GM13977 (cell line): ENCODE measurements at regions of chr1 and their contacts with region 1.

Region 1: DNA sequence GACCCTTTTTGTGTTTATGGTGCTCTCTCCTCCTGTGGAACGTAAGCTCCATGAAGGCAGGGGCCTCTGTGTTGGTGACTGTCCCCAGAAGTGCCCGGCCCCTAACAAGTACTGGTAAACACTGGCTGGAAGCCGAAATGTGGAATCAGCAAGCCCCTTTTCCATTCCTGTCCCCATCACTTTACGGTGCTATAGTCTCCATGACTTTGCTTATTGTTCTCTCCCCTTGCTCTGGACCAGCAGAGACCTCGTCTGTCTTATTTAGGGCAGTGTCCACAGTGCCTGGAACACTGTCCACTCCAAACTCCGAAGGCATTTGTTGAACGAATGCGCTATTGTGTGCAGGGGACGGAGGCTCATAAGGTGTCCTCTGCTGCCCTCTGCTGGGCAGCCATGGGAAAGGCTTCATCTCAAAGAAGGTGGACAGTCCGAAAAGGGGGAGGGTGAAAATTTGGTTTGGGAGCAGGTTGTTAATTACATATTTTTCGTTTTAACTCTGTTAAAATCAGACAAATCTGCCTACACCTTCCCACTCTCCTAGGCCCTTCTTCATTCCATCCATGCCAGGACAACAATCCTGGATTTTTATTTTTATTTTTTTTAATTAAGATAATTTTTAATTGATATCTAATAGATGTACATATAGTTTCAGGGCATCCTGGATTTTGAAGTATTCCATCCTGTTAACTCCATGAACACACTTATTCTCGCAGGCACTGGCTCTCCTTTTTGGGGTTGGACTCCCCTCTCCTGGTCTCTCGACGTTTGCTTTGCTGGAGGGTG is 115.6 kb downstream of the PGBD5 start:
- DNase-seq: peak; percentile 85
- CTCF ChIP-seq: peak; percentile 87

Region 2: GRCh38 chr1:229270547-229271447 is 1039.8 kb before region 1 on chr1 and contains the start of gene RAB4A:
- in situ Hi-C with region 1: loop called (anchors 25 kb)
- DNase-seq: peak; percentile 95
- CTCF ChIP-seq: no peak

Region 3: GRCh38 chr1:229661022-229661877 is 649.3 kb before region 1 on chr1:
- in situ Hi-C with region 1: loop called (anchors 25 kb)
- DNase-seq: peak; percentile 77
- CTCF ChIP-seq: peak; percentile 94